OCI-LY7 (cell line): ENCODE measurements at regions of chr16 and their contacts with region 1.

Region 1: DNA sequence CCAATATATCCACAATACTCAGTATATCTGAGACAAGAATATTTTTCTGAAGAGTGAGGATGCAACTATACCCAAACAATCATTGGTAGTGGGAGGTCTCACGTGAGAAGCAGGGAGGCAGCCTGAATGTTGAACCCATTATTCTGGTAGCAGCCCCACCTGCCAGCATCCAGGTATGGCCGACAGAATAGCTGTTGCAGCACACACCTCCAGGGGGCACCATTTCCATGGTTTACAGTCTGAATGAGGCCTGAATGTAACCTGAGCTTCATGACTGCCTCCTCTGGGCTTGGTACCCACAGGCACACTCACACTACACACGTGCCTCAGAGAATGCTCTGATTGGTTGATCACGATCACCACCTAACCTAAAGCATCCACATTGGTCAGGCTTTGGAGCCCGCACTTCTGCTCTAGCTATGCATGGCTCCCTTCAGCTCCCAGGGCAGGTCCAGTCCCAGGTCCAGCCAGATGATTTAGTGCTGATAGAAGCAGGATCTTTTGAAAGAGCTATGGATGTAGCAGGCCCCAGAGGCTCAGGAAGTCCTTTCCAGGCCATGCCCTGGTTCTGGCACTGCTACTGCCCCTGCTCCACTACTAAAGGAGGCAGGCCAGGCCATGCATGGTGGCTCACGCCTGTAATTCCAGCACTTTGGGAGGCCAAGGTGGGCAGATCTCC is 11.0 kb upstream of the CBFB start:
- DNase-seq: peak; percentile 93
- H3K4me3 ChIP-seq: no peak overlapping the region
- H3K27ac ChIP-seq: no peak overlapping the region
- H3K4me1 ChIP-seq: peaks cover 21% of the 10 kb centered on the region
- CTCF ChIP-seq: peak; percentile 90

Region 2: GRCh38 chr16:67028555-67029248 is 10.8 kb after region 1 on chr16 and contains the start of gene CBFB:
- CTCF ChIA-PET with region 1: interaction called, 3 read pairs
- POLR2A ChIA-PET with region 1: interaction called, 17 read pairs
- intact Hi-C with region 1: no loop called
- DNase-seq: peak; percentile 94
- H3K4me3 ChIP-seq: peak within 1 kb of the TSS; percentile 90
- H3K27ac ChIP-seq: peak within 1 kb of the TSS; percentile 70
- H3K4me1 ChIP-seq: peaks cover 33% of the 10 kb centered on the region
- CTCF ChIP-seq: peak; percentile 53
- total RNA-seq, gene CBFB: 93.5 and 187 TPM in 2 replicates

Region 3: DNA sequence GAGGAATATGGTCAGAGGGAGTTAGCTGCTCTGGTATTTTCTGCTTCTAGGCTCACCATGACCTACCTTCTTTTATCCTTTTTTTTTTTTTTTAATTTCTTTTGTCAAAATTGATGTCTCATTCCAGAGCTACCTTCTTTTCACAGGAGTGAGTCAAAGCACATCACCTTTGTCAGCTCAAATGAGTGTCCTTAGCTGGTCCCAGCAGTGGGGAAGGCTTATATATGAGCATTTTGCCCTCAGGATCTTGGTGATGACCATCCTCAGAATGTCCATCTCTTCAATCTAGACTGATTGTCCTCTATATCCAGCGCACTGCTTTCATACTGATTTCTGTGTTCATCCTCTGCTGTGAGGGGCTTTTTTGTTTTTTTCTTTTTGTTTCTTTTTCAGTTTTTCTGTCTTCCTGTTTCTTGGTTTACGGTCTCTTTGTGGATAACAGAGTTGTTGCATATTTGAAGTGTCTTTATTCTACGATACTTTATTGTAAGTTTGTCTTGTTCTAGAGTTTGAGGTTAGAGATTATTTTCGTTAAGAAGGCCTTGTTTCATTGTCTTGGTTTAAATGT is 35.9 kb after region 1 on chr16:
- CTCF ChIA-PET with region 1: no interaction called
- POLR2A ChIA-PET with region 1: no interaction called
- intact Hi-C with region 1: no loop called
- DNase-seq: no peak
- H3K4me3 ChIP-seq: no peak overlapping the region
- H3K27ac ChIP-seq: no peak overlapping the region
- H3K4me1 ChIP-seq: no peaks in the 10 kb centered on the region
- CTCF ChIP-seq: no peak

Region 4: GRCh38 chr16:67100569-67101310 is 82.8 kb after region 1 on chr16:
- CTCF ChIA-PET with region 1: interaction called, 3 read pairs
- POLR2A ChIA-PET with region 1: no interaction called
- intact Hi-C with region 1: loop called (anchors 2 kb)
- DNase-seq: peak; percentile 44
- H3K4me3 ChIP-seq: no peak overlapping the region
- H3K27ac ChIP-seq: no peak overlapping the region
- H3K4me1 ChIP-seq: no peaks in the 10 kb centered on the region
- CTCF ChIP-seq: peak; percentile 80

Region 5: GRCh38 chr16:67159593-67160406 is 141.9 kb after region 1 on chr16 and contains the starts of genes FBXL8 and TRADD:
- CTCF ChIA-PET with region 1: no interaction called
- POLR2A ChIA-PET with region 1: interaction called, 3 read pairs
- intact Hi-C with region 1: loop called (anchors 1 kb)
- DNase-seq: peak; percentile 82
- H3K4me3 ChIP-seq: peak within 1 kb of the TSS; percentile 89
- H3K27ac ChIP-seq: peak within 1 kb of the TSS; percentile 10
- H3K4me1 ChIP-seq: peaks cover 21% of the 10 kb centered on the region
- CTCF ChIP-seq: peak; percentile 86
- total RNA-seq, gene FBXL8: 5.8 and 7.3 TPM in 2 replicates
- total RNA-seq, gene TRADD: 11.3 and 11.6 TPM in 2 replicates

Region 6: GRCh38 chr16:67183627-67184328 is 165.8 kb after region 1 on chr16 and contains the start of gene MATCAP1:
- CTCF ChIA-PET with region 1: no interaction called
- POLR2A ChIA-PET with region 1: no interaction called
- intact Hi-C with region 1: loop called (anchors 10 kb)
- DNase-seq: peak; percentile 97
- H3K4me3 ChIP-seq: peak within 1 kb of the TSS; percentile 79
- H3K27ac ChIP-seq: peak within 1 kb of the TSS; percentile 56
- H3K4me1 ChIP-seq: peaks cover 14% of the 10 kb centered on the region
- CTCF ChIP-seq: no peak
- total RNA-seq, gene MATCAP1: 18.0 and 22.9 TPM in 2 replicates

Region 7: DNA sequence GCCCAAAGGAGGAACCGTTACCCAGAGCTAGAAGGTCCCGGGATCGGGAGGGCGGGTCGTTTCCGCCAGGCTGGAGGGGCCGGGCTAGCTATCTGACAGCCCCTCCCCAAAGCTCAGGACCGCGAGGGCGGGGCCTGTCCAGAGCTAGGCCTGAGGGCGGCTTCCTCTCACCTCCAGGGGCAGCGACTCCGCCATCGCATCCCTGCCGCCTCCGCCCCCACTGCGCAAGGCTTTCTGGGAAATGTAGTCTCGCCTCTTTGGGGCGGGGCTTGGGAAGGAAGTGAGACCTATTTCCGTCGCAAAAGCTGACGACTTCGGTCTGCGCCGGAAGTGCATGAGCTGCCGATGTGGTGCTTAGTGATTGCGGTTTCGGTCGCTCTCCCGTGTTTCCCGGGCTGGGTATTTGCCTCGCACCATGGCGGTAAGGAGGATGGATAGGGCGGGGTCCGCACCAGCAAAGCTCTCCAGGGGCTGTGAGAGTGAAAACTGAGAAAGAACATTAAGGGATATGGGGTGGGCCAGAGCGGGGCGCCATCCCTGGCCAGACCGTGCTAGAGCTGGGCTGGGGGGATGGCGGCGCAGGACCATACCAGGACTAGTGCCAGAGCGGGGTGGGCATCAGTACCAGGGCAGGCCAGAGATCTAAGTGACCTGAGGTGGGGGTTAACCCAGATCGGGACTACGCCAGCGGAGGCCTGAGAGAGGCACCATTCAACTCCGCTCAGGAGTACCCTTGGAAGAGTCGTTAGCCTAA is 209.0 kb after region 1 on chr16 and contains the start of gene TMEM208:
- CTCF ChIA-PET with region 1: interaction called, 5 read pairs
- POLR2A ChIA-PET with region 1: interaction called, 3 read pairs
- intact Hi-C with region 1: loop called (anchors 5 kb)
- DNase-seq: peak; percentile 98
- H3K4me3 ChIP-seq: peak within 1 kb of the TSS; percentile 95
- H3K27ac ChIP-seq: peak within 1 kb of the TSS; percentile 19
- H3K4me1 ChIP-seq: peaks cover 18% of the 10 kb centered on the region
- CTCF ChIP-seq: peak; percentile 71
- total RNA-seq, gene TMEM208: 19.9 and 36.7 TPM in 2 replicates